ENCODE measurements at regions of chr1 and their contacts with region 1.

Region 1: GRCh38 chr1:145891587-145892485 is 6.2 kb upstream of the ANKRD35 start:
- DNase-seq: peak; percentile 93
- H3K4me3 ChIP-seq: no peak overlapping the region; the same call in 1 of the 2 replicates
- H3K27me3 ChIP-seq: no peaks in the 10 kb centered on the region
- CTCF ChIP-seq: peak; percentile 93

Region 2: DNA sequence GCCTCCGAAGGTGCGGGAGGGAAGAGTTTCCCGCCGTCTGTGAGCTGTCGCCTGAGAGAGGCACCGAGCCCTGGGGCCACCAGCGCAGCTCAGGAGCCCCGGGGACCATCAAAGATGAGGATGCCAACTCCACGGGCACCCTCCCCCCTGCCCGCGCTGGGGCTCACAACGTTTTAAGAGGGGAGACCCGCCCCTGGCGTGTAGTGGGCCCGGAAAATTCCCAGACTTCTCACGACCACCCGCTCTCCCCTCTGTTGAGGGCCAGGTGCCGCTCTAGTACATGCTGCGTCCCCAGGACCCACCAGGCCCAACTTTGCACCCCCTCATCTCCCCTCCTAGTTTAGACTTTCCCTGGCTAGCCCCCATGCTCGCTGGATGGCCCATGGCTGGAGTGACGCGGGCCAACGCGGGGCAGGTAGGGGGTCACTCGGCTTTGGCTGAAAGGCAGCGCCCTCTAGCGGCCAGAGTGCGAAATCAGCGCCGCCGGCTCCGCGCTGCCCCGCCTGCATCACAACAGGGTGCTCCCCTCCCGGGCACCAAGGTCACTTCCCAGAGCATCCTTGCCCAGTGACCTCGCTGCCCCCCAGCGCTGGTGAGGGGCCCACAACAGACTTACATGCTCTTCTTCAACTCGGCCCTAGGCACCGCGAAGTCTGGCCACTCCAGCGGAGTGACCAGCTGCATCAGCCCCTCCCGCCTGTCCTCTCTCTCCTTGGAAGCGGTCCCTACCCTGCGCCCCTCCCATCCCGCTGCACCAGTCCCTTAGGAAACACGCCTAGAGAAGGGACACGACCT is 170.8 kb before region 1 on chr1:
- CTCF ChIA-PET with region 1: no interaction called
- POLR2A ChIA-PET with region 1: no interaction called
- DNase-seq: no peak
- H3K4me3 ChIP-seq: peak overlapping the region; percentile 37
- H3K27me3 ChIP-seq: no peaks in the 10 kb centered on the region
- CTCF ChIP-seq: peak; percentile 94

Region 3: DNA sequence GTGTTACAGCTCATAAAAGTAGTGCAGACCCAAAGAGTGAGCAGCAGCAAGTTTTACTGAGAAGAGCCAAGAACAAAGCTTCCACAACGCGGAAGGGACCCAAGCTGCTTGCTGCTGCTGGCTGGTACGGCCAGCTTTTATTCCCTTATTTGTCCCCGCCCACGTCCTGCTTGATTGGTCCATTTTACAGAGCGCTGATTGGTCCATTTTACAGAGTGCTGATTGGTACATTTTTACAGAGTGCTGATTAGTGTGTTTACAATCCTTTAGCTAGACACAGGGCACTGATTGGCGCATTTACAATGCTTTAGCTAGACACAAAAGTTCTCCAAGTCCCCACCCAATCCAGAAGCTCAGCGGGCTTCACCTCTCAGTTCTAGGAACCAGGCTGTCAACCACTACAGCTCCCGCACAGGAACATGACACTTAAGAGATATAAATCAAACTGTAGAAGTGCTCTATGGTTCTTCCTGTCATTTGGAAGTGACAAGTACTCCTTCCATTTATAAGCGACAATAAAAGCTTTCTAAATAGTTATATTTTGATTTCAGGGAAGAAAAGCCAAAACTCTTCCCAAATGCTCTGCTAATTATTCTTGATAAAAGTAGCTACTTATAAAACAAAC is 96.5 kb before region 1 on chr1:
- CTCF ChIA-PET with region 1: no interaction called
- POLR2A ChIA-PET with region 1: no interaction called
- DNase-seq: no peak
- H3K4me3 ChIP-seq: no peak overlapping the region
- H3K27me3 ChIP-seq: no peaks in the 10 kb centered on the region
- CTCF ChIP-seq: no peak

Region 4: GRCh38 chr1:145858894-145859490 is 32.8 kb before region 1 on chr1 and contains the start of gene PIAS3:
- CTCF ChIA-PET with region 1: interaction called, 25 read pairs
- POLR2A ChIA-PET with region 1: no interaction called
- DNase-seq: peak; percentile 65
- H3K4me3 ChIP-seq: peak within 1 kb of the TSS; percentile 90
- H3K27me3 ChIP-seq: no peaks in the 10 kb centered on the region
- CTCF ChIP-seq: no peak
- polyA plus RNA-seq, gene PIAS3: 30.0 and 38.0 TPM in 2 replicates

Region 5: GRCh38 chr1:145879775-145880174 is 12.1 kb before region 1 on chr1:
- CTCF ChIA-PET with region 1: interaction called, 29 read pairs
- POLR2A ChIA-PET with region 1: no interaction called
- DNase-seq: no peak
- H3K4me3 ChIP-seq: no peak overlapping the region
- H3K27me3 ChIP-seq: no peaks in the 10 kb centered on the region
- CTCF ChIP-seq: no peak

Region 6: DNA sequence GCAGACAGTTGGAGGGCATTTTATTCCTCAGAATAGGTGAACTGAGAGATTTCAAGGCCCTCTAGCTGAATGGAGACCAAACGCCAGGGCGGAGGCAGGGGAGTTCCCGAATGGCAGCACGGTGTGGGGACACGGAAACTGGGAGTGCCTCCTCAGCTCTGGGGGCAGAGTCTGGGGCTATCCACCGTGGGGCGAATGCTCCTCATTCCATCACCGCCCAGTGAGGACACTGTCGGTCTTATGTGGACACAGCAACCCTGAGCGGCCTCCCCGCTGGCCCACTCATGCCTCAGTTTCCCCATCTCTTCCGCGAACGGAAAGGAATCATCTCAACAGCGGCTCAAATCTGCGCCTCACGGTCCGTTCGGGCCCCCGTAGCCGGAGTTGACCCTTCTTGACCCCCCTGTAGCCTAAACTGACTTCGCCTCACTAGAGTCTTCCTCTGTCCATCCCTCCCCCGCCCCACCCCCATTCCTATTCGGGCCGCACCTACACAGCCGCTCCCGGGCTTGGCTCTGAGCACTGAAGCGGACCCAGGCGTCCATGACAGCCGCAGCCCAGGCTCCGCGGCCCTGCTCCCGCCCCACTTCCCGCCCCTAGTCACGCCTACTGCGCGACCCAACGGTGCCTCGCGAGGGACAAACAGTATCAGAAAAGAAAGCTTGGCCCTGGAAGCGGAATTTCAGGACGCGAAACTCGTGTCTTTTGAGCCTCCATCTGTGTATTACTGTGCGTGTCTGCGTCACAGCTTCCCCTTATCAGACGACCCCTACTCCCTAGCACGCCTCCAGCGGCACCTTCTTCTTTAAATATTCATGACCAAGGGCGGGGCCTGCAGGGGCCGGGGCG is 26.5 kb after region 1 on chr1 and contains the start of gene PEX11B:
- CTCF ChIA-PET with region 1: interaction called, 23 read pairs
- POLR2A ChIA-PET with region 1: no interaction called
- DNase-seq: peak; percentile 43
- H3K4me3 ChIP-seq: peak within 1 kb of the TSS; percentile 61
- H3K27me3 ChIP-seq: no peaks in the 10 kb centered on the region
- CTCF ChIP-seq: no peak
- polyA plus RNA-seq, gene PEX11B: 34.9 and 46.4 TPM in 2 replicates

Region 7: GRCh38 chr1:145978854-145979759 is 87.3 kb after region 1 on chr1:
- CTCF ChIA-PET with region 1: interaction called, 15 read pairs
- POLR2A ChIA-PET with region 1: no interaction called
- DNase-seq: peak; percentile 100
- H3K4me3 ChIP-seq: peak overlapping the region; percentile 10
- H3K27me3 ChIP-seq: no peaks in the 10 kb centered on the region
- CTCF ChIP-seq: peak; percentile 45

Region 8: DNA sequence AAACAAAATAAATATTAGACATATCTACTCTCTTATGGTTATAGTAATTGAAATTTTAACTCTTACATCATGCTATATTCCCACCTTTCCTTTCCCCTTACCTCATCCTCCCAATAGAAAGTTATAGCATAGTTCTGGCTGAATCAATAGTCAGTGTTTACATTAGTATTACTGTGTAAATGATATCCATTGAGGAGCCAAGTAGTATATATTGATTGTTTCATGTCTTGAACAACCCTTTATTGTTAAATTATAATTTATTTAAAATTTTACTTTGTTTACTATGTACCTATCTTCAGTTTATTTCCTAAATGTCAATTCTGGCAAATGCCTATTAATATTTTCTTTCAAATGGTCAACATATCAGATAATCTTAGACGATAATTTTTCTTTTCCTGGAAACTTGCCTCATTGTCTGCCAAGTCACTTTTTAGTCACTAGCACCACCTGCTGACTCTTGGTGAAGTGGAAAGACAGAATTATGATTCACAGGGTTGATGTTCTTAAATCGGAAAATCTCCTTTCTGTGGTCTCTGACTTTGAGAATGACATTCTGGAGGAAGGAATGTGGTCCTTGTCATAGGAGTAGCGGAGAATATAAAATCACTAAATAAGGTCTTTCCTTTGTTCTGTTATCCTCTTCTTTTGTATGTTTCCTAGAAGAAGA is 121.0 kb after region 1 on chr1:
- CTCF ChIA-PET with region 1: interaction called, 31 read pairs
- POLR2A ChIA-PET with region 1: no interaction called
- DNase-seq: no peak
- H3K4me3 ChIP-seq: no peak overlapping the region
- H3K27me3 ChIP-seq: no peaks in the 10 kb centered on the region
- CTCF ChIP-seq: peak; percentile 73

Region 9: DNA sequence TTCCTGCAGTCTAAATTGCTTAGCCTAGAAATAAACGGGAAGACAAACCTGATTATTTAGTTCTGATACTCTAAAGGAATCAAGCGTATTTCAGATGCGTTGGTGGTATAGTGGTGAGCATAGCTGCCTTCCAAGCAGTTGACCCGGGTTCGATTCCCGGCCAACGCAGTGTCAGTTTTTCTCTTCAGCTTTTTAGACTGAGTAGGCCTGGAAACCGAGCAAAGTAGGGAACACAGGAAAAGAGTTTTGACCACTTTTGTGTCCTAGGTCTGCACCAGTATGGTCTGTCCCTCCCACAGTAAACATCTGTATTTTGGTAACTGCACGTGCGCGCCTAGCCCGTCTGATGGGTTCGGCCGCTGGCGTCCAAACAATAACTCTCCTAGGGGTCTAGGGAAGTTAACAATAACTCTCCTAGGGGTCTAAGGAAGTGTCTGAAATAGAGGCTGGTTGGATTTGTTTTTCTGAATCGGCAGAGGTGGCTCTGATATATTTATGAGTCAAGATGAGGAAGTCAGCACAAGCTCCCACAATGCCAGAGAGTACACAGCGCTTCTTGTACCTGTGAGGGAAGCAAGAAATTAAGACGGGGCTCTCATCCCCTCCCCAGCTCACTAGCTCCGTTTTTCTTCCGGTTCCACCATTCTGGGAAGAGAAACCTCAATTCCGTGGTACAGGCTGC is 145.3 kb after region 1 on chr1:
- CTCF ChIA-PET with region 1: interaction called, 11 read pairs
- POLR2A ChIA-PET with region 1: no interaction called
- DNase-seq: no peak
- H3K4me3 ChIP-seq: peak overlapping the region; percentile 50
- H3K27me3 ChIP-seq: no peaks in the 10 kb centered on the region
- CTCF ChIP-seq: no peak

Measured in BJ (cell line).